ENCODE measurements at regions of chr10 and their contacts with region 1.

Region 1: GRCh38 chr10:73625884-73626752 is 15.2 kb downstream of the MYOZ1 start:
- DNase-seq: peak; percentile 97
- ATAC-seq: peak; percentile 99
- H3K4me3 Mint-ChIP-seq: peak overlapping the region; percentile 96
- H3K27ac Mint-ChIP-seq: peak overlapping the region; percentile 98
- H3K4me1 Mint-ChIP-seq: peaks cover 19% of the 10 kb centered on the region
- H3K27me3 Mint-ChIP-seq: no peaks in the 10 kb centered on the region

Region 2: GRCh38 chr10:73252445-73253224 is 373.5 kb before region 1 on chr10 and contains the start of gene MRPS16:
- CTCF ChIA-PET with region 1: no interaction called
- POLR2A ChIA-PET with region 1: interaction called, 5 read pairs
- intact Hi-C with region 1: loop called (anchors 1 kb)
- DNase-seq: peak; percentile 95
- ATAC-seq: peak; percentile 84
- H3K4me3 Mint-ChIP-seq: peak within 1 kb of the TSS; percentile 94
- H3K27ac Mint-ChIP-seq: peak within 1 kb of the TSS; percentile 98
- H3K4me1 Mint-ChIP-seq: peaks cover 32% of the 10 kb centered on the region
- H3K27me3 Mint-ChIP-seq: no peaks in the 10 kb centered on the region
- total RNA-seq, gene MRPS16: 123 to 138 TPM

Region 3: DNA sequence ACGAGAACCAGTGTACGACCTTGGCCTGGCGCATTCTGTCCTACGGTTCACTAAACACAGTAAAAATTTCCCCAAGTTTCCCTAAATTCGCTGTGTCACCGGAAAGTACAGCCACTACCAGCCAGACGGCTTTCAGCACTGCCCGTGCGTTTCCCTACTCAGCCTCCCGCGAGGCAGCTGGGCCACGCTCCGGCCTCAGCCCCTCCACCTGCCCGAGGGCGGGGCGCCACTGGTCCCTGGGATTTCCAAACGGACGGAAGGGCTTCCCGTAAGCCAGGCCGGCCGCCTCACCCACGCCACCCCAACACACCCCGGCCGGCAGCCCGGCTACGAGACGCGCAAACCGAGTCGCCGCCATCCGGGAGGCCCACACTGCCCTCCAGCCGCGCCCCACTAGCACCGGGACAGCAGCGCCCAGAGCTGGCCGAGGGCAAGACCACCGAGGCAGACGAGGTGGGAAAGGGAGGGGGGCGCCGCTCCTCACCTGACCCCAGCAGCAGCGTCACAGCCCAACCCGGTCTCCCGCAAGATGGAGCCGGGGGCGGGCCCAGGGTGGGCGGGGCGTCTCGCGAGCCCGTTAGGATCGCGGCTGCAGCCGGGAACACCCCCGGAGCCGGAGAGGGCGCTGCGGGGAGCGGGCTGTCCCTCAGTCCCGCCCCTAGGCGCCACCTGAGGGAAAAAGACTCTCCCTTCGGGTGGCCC is 212.4 kb before region 1 on chr10 and contains the start of gene ANXA7:
- CTCF ChIA-PET with region 1: interaction called, 3 read pairs
- POLR2A ChIA-PET with region 1: no interaction called
- intact Hi-C with region 1: loop called (anchors 1 kb)
- DNase-seq: peak; percentile 97
- ATAC-seq: peak; percentile 96
- H3K4me3 Mint-ChIP-seq: peak within 1 kb of the TSS; percentile 94
- H3K27ac Mint-ChIP-seq: peak within 1 kb of the TSS; percentile 93
- H3K4me1 Mint-ChIP-seq: peaks cover 52% of the 10 kb centered on the region
- H3K27me3 Mint-ChIP-seq: peaks cover 3% of the 10 kb centered on the region
- total RNA-seq, gene ANXA7: 94.6 to 118 TPM

Region 4: GRCh38 chr10:73529089-73529832 is 96.9 kb before region 1 on chr10:
- CTCF ChIA-PET with region 1: interaction called, 10 read pairs
- POLR2A ChIA-PET with region 1: no interaction called
- intact Hi-C with region 1: no loop called
- DNase-seq: peak; percentile 57
- ATAC-seq: peak; percentile 89
- H3K4me3 Mint-ChIP-seq: no peak overlapping the region
- H3K27ac Mint-ChIP-seq: no peak overlapping the region
- H3K4me1 Mint-ChIP-seq: no peaks in the 10 kb centered on the region
- H3K27me3 Mint-ChIP-seq: no peaks in the 10 kb centered on the region

Region 5: DNA sequence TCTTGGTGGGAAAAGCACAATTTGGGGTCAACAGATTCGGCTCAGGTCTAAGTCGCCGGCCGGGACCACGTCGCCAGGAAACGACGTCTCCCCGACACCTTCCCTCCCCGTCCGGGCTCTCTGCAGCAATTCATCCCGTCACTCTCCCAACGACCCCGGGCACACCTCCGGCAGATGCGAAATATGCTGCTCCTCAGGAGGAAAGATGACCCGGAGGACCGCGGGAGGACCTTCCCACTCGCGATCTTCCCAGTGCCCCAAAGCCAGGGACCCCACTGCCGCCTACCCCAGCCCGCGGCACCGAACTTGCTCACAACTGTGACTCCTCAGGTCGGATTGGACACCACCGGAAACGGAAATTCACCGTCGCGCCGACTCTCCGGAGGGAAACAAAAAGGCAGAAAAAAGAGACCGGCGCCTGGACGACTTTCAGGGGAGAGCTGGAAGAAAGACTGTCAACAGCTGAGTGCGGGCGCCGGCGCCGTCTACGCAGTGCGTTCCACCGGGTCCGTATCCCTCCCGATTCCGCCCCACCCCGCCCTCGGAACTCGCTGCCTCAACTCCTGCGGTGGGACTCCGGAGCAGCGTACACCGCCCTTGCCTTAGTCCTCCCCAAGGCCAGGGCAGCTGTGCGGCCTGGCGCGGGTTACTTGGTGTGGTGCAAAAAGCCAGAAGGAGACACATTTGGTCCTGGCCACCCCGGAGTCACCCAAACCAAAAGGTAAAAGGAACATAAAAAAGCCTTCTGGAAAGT is 104.2 kb after region 1 on chr10:
- CTCF ChIA-PET with region 1: no interaction called
- POLR2A ChIA-PET with region 1: no interaction called
- intact Hi-C with region 1: loop called in 1 of 2 experiments (anchors 1 kb)
- DNase-seq: peak; percentile 95
- ATAC-seq: peak; percentile 93
- H3K4me3 Mint-ChIP-seq: peak overlapping the region; percentile 98
- H3K27ac Mint-ChIP-seq: peak overlapping the region; percentile 97
- H3K4me1 Mint-ChIP-seq: peaks cover 9% of the 10 kb centered on the region
- H3K27me3 Mint-ChIP-seq: no peaks in the 10 kb centered on the region

Region 6: GRCh38 chr10:73785221-73785720 is 159.2 kb after region 1 on chr10 and contains the start of gene ZSWIM8:
- CTCF ChIA-PET with region 1: no interaction called
- POLR2A ChIA-PET with region 1: no interaction called
- intact Hi-C with region 1: loop called in 1 of 2 experiments (anchors 1 kb)
- DNase-seq: peak; percentile 90
- ATAC-seq: peak; percentile 85
- H3K4me3 Mint-ChIP-seq: peak within 1 kb of the TSS; percentile 83
- H3K27ac Mint-ChIP-seq: peak within 1 kb of the TSS; percentile 98
- H3K4me1 Mint-ChIP-seq: peaks cover 46% of the 10 kb centered on the region
- H3K27me3 Mint-ChIP-seq: no peaks in the 10 kb centered on the region
- total RNA-seq, gene ZSWIM8: 40.1 to 67.3 TPM

Region 7: GRCh38 chr10:73838827-73839226 is 212.7 kb after region 1 on chr10:
- CTCF ChIA-PET with region 1: no interaction called
- POLR2A ChIA-PET with region 1: no interaction called
- intact Hi-C with region 1: no loop called
- DNase-seq: no peak
- ATAC-seq: no peak
- H3K4me3 Mint-ChIP-seq: no peak overlapping the region
- H3K27ac Mint-ChIP-seq: no peak overlapping the region
- H3K4me1 Mint-ChIP-seq: no peaks in the 10 kb centered on the region
- H3K27me3 Mint-ChIP-seq: no peaks in the 10 kb centered on the region